HepG2 (cell line): ENCODE measurements at regions of chr10 and their contacts with region 1.

Region 1: GRCh38 chr10:96129387-96130325 is at the start of gene ZNF518A:
- DNase-seq: peak; percentile 90
- ATAC-seq: peak; percentile 91
- H3K4me3 ChIP-seq: peak within 1 kb of the TSS; percentile 61 to 90 (median 86)
- H3K27ac ChIP-seq: peak within 1 kb of the TSS; percentile 100
- H3K4me1 ChIP-seq: peaks cover 37% of the 10 kb centered on the region
- H3K27me3 ChIP-seq: no peaks in the 10 kb centered on the region; a peak in 1 of 5 replicates
- CTCF ChIP-seq: 0 out of 2 replicates have a peak, but pooled peaks have one; percentile 6
- EP300 ChIP-seq: no peak
- POLR2A ChIP-seq: peak; percentile 86 to 96
- RAD21 ChIP-seq: peak; percentile 72
- total RNA-seq, gene ZNF518A: 37.1 and 61.6 TPM in 2 replicates

Region 2: GRCh38 chr10:96043033-96043932 is 86.4 kb before region 1 on chr10 and contains the start of gene CCNJ:
- CTCF ChIA-PET with region 1: no interaction called
- POLR2A ChIA-PET with region 1: interaction called, 32 read pairs
- in situ Hi-C with region 1: loop called (anchors 5 kb)
- intact Hi-C with region 1: loop called (anchors 1 kb)
- DNase-seq: peak; percentile 84
- ATAC-seq: peak; percentile 95
- H3K4me3 ChIP-seq: peak within 1 kb of the TSS; percentile 89 to 91 (median 90)
- H3K27ac ChIP-seq: peak within 1 kb of the TSS; percentile 87
- H3K4me1 ChIP-seq: peaks cover 36% of the 10 kb centered on the region
- H3K27me3 ChIP-seq: no peaks in the 10 kb centered on the region; a peak in 1 of 5 replicates
- CTCF ChIP-seq: peak; percentile 41; the same call in 1 of the 2 replicates
- EP300 ChIP-seq: 0 out of 4 replicates have a peak, but pooled peaks of 1 of the 2 experiments have one; percentile 27
- POLR2A ChIP-seq: peak; percentile 80 to 87
- RAD21 ChIP-seq: peak; percentile 54
- total RNA-seq, gene CCNJ: 21.5 and 33.9 TPM in 2 replicates

Region 3: GRCh38 chr10:96082748-96083147 is 46.9 kb before region 1 on chr10:
- CTCF ChIA-PET with region 1: no interaction called
- POLR2A ChIA-PET with region 1: interaction called, 14 read pairs
- in situ Hi-C with region 1: no loop called
- intact Hi-C with region 1: no loop called
- DNase-seq: no peak
- ATAC-seq: no peak
- H3K4me3 ChIP-seq: no peak overlapping the region
- H3K27ac ChIP-seq: no peak overlapping the region
- H3K4me1 ChIP-seq: peaks cover 1% of the 10 kb centered on the region
- H3K27me3 ChIP-seq: no peaks in the 10 kb centered on the region
- CTCF ChIP-seq: no peak
- EP300 ChIP-seq: no peak
- POLR2A ChIP-seq: no peak
- RAD21 ChIP-seq: no peak

Region 4: DNA sequence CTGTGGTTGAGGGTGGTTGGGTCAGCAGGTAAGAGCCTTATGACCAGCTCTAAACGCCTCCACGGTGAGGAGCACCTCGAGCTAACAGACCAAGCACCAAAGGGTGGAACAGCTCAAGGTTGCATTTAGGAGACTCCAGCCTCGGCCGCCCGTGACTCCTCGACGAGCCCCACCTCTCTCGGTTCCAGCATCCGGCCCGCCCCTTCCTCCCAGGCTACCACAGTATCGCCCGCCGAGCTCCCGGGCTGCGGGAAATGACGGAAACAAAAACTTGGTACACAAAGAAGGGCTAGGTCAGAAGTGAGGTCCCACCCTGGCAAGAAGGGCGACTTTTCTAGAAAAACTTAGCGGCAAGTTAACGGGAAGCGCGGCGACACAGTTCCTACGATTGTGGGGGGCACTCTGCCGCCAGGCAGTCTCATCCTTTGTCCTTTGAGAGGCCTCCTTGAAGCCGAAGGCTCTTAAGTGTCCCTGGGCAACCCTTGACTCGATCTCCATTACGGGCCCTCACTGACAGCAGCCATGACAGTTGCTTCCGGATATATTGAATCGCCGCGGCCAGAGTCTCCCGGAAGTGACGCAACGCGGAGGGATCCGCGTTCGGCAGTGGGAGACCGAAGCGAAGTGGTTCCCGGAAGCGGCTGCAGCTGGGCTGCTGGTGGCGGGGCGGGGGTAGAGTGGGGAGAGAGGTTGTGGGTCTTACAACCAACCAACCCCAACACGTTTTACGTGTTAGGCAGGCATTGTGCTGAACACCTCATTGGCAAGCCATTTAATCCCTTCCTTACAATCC is 39.8 kb before region 1 on chr10:
- CTCF ChIA-PET with region 1: no interaction called
- POLR2A ChIA-PET with region 1: interaction called, 325 read pairs
- in situ Hi-C with region 1: loop called (anchors 5 kb)
- intact Hi-C with region 1: loop called (anchors 1 kb)
- DNase-seq: peak; percentile 93
- ATAC-seq: peak; percentile 89
- H3K4me3 ChIP-seq: peak overlapping the region; percentile 60 to 90 (median 88)
- H3K27ac ChIP-seq: peak overlapping the region; percentile 100
- H3K4me1 ChIP-seq: peaks cover 60% of the 10 kb centered on the region
- H3K27me3 ChIP-seq: no peaks in the 10 kb centered on the region; a peak in 1 of 5 replicates
- CTCF ChIP-seq: 0 out of 2 replicates have a peak, but pooled peaks have one; percentile 22
- EP300 ChIP-seq: peak; percentile 39 to 57; a peak in 3 of 4 replicates
- POLR2A ChIP-seq: peak; percentile 71 to 78
- RAD21 ChIP-seq: peak; percentile 48

Region 5: DNA sequence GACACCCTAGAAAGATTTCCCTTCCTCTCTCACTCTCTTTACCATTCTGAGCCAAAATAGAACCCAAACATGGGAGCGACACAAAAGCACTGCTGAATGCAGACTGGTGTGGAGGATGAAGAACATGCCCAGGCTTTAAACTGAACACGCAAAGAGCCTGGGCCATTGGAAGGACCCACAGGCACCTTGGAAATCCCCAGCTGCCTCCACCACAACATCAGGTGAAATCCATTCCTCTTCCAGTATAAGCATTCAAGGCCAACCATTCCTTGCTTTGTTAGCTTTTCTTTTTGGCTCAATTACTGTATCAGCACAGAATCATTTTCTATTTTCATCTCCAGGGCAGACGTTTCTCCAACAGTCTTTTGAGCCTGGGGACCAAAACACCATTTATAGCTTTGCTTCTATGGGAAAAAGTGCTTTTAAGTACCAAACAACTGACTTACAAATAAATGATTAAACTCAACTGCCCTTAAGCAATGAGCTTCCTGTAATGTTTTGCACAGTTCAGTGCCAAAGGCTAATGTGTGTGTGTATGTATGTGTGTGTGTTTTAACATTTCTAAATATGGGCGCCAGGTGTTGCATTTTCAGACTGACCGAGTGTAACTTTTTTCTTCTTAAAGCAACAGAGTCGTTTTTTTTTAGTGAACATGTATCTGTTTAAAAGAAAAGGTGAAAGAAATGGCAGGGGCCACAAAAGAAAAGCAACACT is 157.9 kb after region 1 on chr10:
- CTCF ChIA-PET with region 1: no interaction called
- POLR2A ChIA-PET with region 1: interaction called, 15 read pairs
- in situ Hi-C with region 1: no loop called
- intact Hi-C with region 1: no loop called
- DNase-seq: peak; percentile 72
- ATAC-seq: peak; percentile 93
- H3K4me3 ChIP-seq: peak overlapping the region in 2 of 3 experiments; percentile 66; a peak in 4 of 6 replicates
- H3K27ac ChIP-seq: peak overlapping the region; percentile 58
- H3K4me1 ChIP-seq: peaks cover 11% of the 10 kb centered on the region
- H3K27me3 ChIP-seq: no peaks in the 10 kb centered on the region; a peak in 1 of 5 replicates
- CTCF ChIP-seq: no peak
- EP300 ChIP-seq: no peak
- POLR2A ChIP-seq: no peak
- RAD21 ChIP-seq: no peak